ENCODE measurements at regions of chr16 and their contacts with region 1.

Region 1: GRCh38 chr16:69339289-69340108 is at the starts of genes COG8 and NIP7:
- DNase-seq: peak; percentile 78 to 91 (median 90)
- ATAC-seq: peak; percentile 95
- H3K4me3 ChIP-seq: peak within 1 kb of the TSS; percentile 80
- H3K4me3 Mint-ChIP-seq: peak within 1 kb of the TSS; percentile 97 to 100 (median 99)
- H3K27ac ChIP-seq: peak within 1 kb of the TSS; percentile 86
- H3K27ac Mint-ChIP-seq: peak within 1 kb of the TSS; percentile 95 to 99 (median 98)
- H3K4me1 ChIP-seq: peaks cover 20 to 25% of the 10 kb centered on the region in 2 donors
- H3K4me1 Mint-ChIP-seq: peaks cover 31 to 70% (median 49%) of the 10 kb centered on the region in 7 donors
- H3K27me3 ChIP-seq: no peaks in the 10 kb centered on the region
- H3K27me3 Mint-ChIP-seq: no peaks in the 10 kb centered on the region
- total RNA-seq, gene COG8: 29.5 to 73.7 (median 37.4) TPM
- total RNA-seq, gene NIP7: 22.1 to 40.9 (median 30.3) TPM

Region 2: DNA sequence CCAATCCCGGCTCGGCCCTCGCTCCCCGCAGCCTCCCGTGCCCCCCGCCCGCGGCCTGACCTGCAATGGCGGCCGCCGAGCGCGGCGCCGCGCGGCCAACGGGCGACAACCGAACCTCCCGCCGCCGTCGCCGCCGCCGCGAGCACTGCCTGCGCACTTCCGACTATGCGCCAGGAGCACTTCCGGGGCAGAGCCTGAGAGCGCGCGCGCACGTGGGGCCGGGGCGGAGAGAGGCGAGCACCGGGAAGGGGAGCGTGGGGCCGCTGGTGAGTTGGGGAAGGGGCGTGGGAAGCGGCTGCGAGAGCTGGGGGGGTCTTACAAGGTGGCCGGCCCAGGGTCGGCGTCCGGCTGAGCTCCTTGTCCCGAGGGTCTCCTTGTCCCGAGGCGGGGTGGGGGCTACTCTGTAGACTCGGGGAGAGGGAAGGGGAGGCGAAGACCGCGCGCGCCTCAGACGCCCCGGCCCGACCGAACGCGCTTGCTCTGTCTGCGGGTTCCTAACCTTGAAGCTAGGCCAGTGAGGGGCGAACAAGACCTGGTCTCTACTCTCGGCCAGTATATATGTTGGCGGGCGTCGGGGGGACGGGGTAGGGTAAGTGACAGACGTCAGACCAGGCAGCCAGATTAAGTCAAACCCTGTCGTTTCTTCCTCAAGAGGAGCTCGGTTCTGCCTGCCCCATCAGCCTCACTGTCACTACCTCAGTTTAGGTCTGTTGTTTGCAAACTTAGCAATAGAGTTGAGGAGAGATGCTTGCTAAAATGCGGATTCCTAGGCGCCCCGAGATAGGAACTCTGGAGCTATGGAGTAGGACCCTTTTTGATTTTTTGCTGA is 206.9 kb before region 1 on chr16 and contains the starts of genes CHTF8 and UTP4:
- CTCF ChIA-PET with region 1: no interaction called
- POLR2A ChIA-PET with region 1: no interaction called
- intact Hi-C with region 1: loop called in 1 of 2 experiments (anchors 1 kb)
- DNase-seq: peak; percentile 81 to 91 (median 87)
- ATAC-seq: peak; percentile 95
- H3K4me3 ChIP-seq: peak within 1 kb of the TSS; percentile 80
- H3K4me3 Mint-ChIP-seq: peak within 1 kb of the TSS; percentile 91 to 97 (median 94)
- H3K27ac ChIP-seq: peak within 1 kb of the TSS; percentile 88
- H3K27ac Mint-ChIP-seq: peak within 1 kb of the TSS; percentile 85 to 97 (median 95)
- H3K4me1 ChIP-seq: peaks cover 12 to 23% of the 10 kb centered on the region in 2 donors
- H3K4me1 Mint-ChIP-seq: peaks cover 16 to 71% (median 61%) of the 10 kb centered on the region in 7 donors
- H3K27me3 ChIP-seq: no peaks in the 10 kb centered on the region
- H3K27me3 Mint-ChIP-seq: no peaks in the 10 kb centered on the region
- total RNA-seq, gene CHTF8: 53.3 to 142 (median 133) TPM
- total RNA-seq, gene UTP4: 31.9 to 56.5 (median 35.1) TPM

Region 3: GRCh38 chr16:69410285-69410990 is 70.9 kb after region 1 on chr16:
- CTCF ChIA-PET with region 1: no interaction called
- POLR2A ChIA-PET with region 1: no interaction called
- intact Hi-C with region 1: no loop called
- DNase-seq: no peak
- ATAC-seq: no peak
- H3K4me3 ChIP-seq: no peak overlapping the region
- H3K4me3 Mint-ChIP-seq: peak overlapping the region in 3 of 10 donors; percentile 16 to 37 (median 37)
- H3K27ac ChIP-seq: no peak overlapping the region
- H3K27ac Mint-ChIP-seq: peak overlapping the region in 5 of 9 donors; percentile 12 to 78 (median 69)
- H3K4me1 ChIP-seq: no peaks in the 10 kb centered on the region
- H3K4me1 Mint-ChIP-seq: peaks cover 7 to 20% (median 11%) of the 10 kb centered on the region in 7 donors
- H3K27me3 ChIP-seq: no peaks in the 10 kb centered on the region
- H3K27me3 Mint-ChIP-seq: no peaks in the 10 kb centered on the region

Region 4: GRCh38 chr16:69761983-69762813 is 422.7 kb after region 1 on chr16 and contains the start of gene WWP2:
- CTCF ChIA-PET with region 1: no interaction called
- POLR2A ChIA-PET with region 1: no interaction called
- intact Hi-C with region 1: loop called in 1 of 2 experiments (anchors 2 kb)
- DNase-seq: peak; percentile 68 to 81 (median 77)
- ATAC-seq: peak; percentile 86
- H3K4me3 ChIP-seq: peak within 1 kb of the TSS; percentile 88
- H3K4me3 Mint-ChIP-seq: peak within 1 kb of the TSS; percentile 77 to 96 (median 94)
- H3K27ac ChIP-seq: peak within 1 kb of the TSS; percentile 92
- H3K27ac Mint-ChIP-seq: peak within 1 kb of the TSS; percentile 93 to 99 (median 98)
- H3K4me1 ChIP-seq: peaks cover 10 to 14% of the 10 kb centered on the region in 2 donors
- H3K4me1 Mint-ChIP-seq: peaks cover 16 to 47% (median 37%) of the 10 kb centered on the region in 7 donors
- H3K27me3 ChIP-seq: no peaks in the 10 kb centered on the region
- H3K27me3 Mint-ChIP-seq: peaks cover 0 to 5% (median 0%) of the 10 kb centered on the region in 5 donors
- total RNA-seq, gene WWP2: 58.4 to 81.3 (median 72.1) TPM